ENCODE measurements at regions of chr5 and their contacts with region 1.

Region 1: DNA sequence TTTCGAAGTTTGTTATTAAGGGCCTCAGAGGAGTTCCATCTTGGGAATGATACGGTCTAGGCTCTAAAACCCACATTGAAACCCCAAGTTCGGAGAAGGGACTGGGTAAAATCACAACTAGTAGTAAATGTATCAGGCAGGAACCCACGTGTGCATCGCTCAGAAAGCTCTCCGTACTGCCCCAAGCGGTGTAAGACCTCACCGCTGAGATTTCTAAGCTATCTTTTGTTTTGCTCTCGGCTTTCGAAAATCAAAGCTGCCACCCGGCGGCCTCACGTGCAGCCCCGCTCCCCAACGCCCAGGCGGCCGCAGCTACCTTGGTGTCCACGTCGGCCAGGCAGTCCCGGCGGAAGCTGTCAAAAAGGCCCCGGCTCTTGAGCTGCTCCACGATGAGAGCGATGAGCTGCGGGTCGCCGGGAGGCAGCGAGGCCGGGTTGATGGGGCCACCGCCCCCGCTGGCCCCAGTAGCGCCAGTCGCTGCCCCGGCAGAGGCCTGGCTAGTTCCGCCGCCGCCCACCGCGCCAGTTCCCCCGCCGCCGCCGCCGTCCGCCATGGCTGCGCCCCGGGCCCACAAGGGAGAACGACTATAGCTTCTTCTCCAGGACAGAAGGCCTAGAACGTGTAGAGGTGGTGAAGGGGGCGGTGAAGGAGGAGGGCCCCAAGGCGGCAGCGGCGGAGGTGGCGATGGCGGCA is 420 bp downstream of the BOD1 start:
- DNase-seq: peak; percentile 80
- H3K4me3 Mint-ChIP-seq: peak overlapping the region; percentile 95
- H3K27ac Mint-ChIP-seq: peak overlapping the region; percentile 90
- H3K4me1 Mint-ChIP-seq: peaks cover 49% of the 10 kb centered on the region
- H3K27me3 Mint-ChIP-seq: no peaks in the 10 kb centered on the region

Region 2: DNA sequence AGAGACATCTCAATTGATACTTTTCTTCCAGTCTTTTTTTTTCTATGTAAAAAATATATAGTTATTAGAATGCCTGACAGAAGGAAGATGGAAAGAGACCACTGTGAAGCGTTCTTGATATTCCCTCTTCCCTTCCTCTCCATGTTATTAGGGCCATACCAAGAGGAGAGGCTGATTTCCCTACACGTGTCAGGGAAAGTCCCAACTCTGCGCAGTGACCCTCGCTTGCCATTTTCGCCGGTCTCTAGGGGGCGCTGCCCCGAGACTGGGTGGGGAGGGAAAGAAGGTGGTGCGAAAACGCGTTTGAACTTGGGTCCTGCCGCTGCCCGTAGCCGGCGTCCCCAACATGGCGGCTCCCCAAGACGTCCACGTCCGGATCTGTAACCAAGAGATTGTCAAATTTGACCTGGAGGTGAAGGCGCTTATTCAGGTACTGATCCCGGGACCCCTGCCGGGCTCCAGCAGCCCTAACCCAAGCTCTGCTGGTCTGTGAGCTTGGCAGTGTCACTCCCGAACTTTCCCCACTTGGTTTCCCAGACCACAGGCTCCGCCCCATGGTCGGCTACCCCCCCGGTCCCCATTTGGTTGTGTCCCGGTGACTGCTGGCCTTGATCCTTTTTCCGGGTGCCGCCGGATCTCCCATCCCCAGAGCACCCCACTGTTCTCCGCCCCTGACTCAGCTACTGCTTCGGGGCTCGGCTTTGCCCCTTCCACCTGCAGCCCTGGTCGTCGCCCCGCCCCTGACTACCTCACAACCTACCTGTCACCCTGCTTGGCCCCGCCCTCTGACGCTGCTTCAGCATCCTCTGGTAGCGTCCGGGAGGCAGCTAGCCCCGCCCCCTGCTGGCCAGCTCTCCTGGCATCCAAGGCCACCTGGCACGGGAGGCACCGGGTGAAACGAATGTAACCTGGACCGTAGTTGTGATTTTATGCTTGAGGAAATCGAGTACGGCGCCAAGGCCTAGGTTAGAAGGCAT is 471.5 kb before region 1 on chr5 and contains the start of gene BNIP1:
- CTCF ChIA-PET with region 1: no interaction called
- POLR2A ChIA-PET with region 1: no interaction called
- intact Hi-C with region 1: loop called (anchors 10 kb)
- DNase-seq: peak; percentile 98
- H3K4me3 Mint-ChIP-seq: peak within 1 kb of the TSS; percentile 99
- H3K27ac Mint-ChIP-seq: peak within 1 kb of the TSS; percentile 97
- H3K4me1 Mint-ChIP-seq: peaks cover 9% of the 10 kb centered on the region
- H3K27me3 Mint-ChIP-seq: no peaks in the 10 kb centered on the region
- total RNA-seq, gene BNIP1: 19.3 to 20.9 TPM

Region 3: GRCh38 chr5:173217626-173218397 is 398.2 kb before region 1 on chr5:
- CTCF ChIA-PET with region 1: no interaction called
- POLR2A ChIA-PET with region 1: no interaction called
- intact Hi-C with region 1: no loop called
- DNase-seq: no peak
- H3K4me3 Mint-ChIP-seq: no peak overlapping the region
- H3K27ac Mint-ChIP-seq: no peak overlapping the region
- H3K4me1 Mint-ChIP-seq: no peaks in the 10 kb centered on the region
- H3K27me3 Mint-ChIP-seq: peaks cover 14% of the 10 kb centered on the region

Region 4: DNA sequence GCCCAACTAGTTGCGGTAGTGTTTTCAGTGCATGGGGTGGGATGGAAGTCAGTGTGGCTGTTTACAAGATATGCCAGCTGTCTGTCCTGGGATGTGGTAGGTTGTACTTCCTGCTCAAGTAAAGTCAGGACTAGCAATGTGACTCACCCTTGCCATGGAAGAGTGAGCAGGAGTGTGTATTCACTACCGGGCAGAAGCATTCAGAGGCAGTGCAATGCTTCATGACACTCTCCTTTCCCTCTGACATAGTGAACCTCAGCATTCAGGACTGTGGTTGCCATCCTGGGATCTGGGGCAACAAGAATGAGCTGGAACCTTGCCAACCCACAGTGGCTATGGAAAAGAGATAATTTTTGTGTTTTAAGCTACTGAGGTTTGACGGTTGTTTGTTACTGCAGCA is 68.5 kb before region 1 on chr5:
- CTCF ChIA-PET with region 1: no interaction called
- POLR2A ChIA-PET with region 1: no interaction called
- intact Hi-C with region 1: no loop called
- DNase-seq: no peak
- H3K4me3 Mint-ChIP-seq: no peak overlapping the region
- H3K27ac Mint-ChIP-seq: no peak overlapping the region
- H3K4me1 Mint-ChIP-seq: no peaks in the 10 kb centered on the region
- H3K27me3 Mint-ChIP-seq: peaks cover 3% of the 10 kb centered on the region

Region 5: GRCh38 chr5:173592050-173592669 is 23.9 kb before region 1 on chr5:
- CTCF ChIA-PET with region 1: interaction called, 15 read pairs
- POLR2A ChIA-PET with region 1: no interaction called
- intact Hi-C with region 1: no loop called
- DNase-seq: peak; percentile 25
- H3K4me3 Mint-ChIP-seq: no peak overlapping the region
- H3K27ac Mint-ChIP-seq: no peak overlapping the region
- H3K4me1 Mint-ChIP-seq: no peaks in the 10 kb centered on the region
- H3K27me3 Mint-ChIP-seq: no peaks in the 10 kb centered on the region

Region 6: DNA sequence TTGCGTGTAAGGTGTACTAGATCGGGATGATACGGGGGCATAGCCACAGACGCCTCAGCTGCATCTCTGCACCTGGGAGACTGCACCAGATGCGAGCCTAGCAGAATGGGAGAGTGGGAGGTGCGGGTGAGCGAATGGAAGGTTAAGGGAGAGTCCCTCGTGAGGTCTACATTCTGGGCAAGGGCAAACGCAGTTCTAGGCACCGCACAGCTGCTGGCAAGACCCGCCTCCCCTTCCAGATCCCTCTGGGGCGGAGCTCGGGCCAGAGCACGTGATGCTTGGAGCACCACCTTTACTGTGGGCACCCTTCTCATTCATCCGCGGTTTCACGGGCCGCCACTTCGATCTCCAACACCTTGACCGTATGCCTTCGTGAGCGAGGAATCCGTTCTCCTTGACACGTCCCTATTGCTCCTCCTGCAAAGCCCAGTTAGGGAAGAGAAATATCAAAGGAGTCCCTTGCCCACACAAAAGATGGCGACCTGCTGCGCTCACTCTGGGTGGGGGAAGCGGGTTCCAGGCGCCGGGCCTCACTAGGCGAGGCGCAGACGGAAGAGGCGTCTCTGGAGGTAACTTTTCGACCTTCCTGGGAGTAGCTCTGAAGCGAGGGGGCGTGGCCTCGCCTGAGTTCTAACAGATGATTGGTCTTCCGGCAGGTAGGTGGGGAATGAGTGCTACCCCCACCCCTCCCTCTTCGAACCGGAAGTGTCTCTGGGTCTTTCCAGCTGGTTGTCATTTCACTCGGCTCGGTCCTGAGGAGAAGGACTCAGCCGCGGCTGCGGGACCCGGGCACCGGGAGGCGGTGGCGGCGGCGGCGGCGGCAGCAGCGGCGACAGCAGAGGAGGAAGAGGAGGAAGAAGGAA is 271.8 kb after region 1 on chr5 and contains the start of gene CPEB4:
- CTCF ChIA-PET with region 1: interaction called, 12 read pairs
- POLR2A ChIA-PET with region 1: interaction called, 15 read pairs
- intact Hi-C with region 1: loop called (anchors 1 kb)
- DNase-seq: peak; percentile 98
- H3K4me3 Mint-ChIP-seq: peak within 1 kb of the TSS; percentile 97
- H3K27ac Mint-ChIP-seq: peak within 1 kb of the TSS; percentile 97
- H3K4me1 Mint-ChIP-seq: peaks cover 72% of the 10 kb centered on the region
- H3K27me3 Mint-ChIP-seq: no peaks in the 10 kb centered on the region
- total RNA-seq, gene CPEB4: 11.4 to 11.9 TPM

Region 7: DNA sequence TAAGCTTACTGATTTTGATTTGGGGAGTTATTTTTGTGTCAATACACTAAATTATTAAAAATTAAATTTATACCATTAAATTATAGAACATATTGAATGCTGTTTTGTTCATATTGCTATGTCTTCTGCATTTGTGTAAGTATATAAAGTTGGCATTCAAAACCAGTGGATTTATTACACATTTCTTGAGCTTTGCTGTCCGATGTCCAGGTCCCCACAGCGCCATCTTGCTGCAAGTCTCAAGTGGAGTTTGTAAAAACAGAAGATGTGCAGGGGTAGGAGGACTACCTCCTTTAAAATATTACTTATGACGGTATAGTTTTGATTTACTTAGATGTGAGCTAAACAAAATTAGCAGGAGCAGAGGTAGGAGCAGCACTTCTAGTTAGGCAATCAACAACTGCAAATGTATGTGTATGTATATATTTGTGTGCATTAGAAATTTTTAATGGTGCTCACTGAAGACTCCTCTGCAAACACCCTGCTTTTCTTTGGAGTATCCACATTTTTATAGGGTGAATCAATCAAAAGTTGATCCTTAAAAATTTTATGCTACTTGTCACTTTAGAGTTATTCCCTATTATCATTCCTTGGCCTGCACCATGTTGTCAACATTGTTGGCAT is 309.5 kb after region 1 on chr5:
- CTCF ChIA-PET with region 1: interaction called, 29 read pairs
- POLR2A ChIA-PET with region 1: interaction called, 4 read pairs
- intact Hi-C with region 1: no loop called
- DNase-seq: peak; percentile 57
- H3K4me3 Mint-ChIP-seq: no peak overlapping the region
- H3K27ac Mint-ChIP-seq: no peak overlapping the region
- H3K4me1 Mint-ChIP-seq: peaks cover 15% of the 10 kb centered on the region
- H3K27me3 Mint-ChIP-seq: no peaks in the 10 kb centered on the region

Region 8: DNA sequence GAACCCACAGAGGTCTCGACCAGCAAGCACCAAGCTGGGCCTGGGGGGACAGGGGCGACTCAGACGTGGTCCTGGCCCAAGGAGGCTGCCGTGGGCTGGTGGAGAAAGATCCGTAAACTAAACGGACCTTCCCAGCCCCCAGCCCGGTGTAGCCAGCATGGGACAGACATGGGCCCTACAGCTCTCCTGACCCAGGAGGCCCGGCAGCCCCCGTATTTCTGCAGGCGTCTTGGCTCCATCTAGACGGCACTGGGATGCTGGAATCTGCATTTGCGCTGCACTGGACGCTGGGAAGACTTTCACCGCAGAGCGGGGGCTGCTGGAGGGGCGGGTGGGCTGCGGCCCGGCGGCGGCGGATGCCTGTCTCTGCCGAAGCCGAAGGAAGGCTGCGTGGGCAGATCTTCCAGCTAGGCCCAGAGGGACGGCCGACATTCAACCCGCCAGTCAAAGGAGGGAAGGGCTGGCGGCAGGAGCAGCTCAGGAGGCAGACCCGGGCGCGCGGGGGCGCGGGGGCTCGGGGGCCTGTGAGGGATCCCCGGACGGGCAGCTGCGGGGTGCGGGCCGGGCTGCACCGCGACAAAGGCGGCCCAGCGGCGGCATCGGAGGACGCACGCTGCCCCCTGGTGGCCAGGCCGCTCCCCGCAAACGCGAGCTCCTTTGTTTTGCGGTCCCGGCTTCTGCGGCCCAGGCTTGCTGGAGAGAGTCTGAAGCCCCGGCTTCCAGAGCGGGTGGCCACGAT is 695.7 kb after region 1 on chr5:
- CTCF ChIA-PET with region 1: interaction called, 13 read pairs
- POLR2A ChIA-PET with region 1: no interaction called
- intact Hi-C with region 1: loop called (anchors 1 kb)
- DNase-seq: peak; percentile 71
- H3K4me3 Mint-ChIP-seq: no peak overlapping the region
- H3K27ac Mint-ChIP-seq: no peak overlapping the region
- H3K4me1 Mint-ChIP-seq: peaks cover 2% of the 10 kb centered on the region
- H3K27me3 Mint-ChIP-seq: peaks cover 41% of the 10 kb centered on the region

Measured in activated CD4-positive, alpha-beta memory T cell treated with anti-CD3 and anti-CD28 coated beads for 36 hours (primary cell).